Ovary (tissue), 10 donors: ENCODE measurements at regions of chr1 and their contacts with region 1.

Region 1: DNA sequence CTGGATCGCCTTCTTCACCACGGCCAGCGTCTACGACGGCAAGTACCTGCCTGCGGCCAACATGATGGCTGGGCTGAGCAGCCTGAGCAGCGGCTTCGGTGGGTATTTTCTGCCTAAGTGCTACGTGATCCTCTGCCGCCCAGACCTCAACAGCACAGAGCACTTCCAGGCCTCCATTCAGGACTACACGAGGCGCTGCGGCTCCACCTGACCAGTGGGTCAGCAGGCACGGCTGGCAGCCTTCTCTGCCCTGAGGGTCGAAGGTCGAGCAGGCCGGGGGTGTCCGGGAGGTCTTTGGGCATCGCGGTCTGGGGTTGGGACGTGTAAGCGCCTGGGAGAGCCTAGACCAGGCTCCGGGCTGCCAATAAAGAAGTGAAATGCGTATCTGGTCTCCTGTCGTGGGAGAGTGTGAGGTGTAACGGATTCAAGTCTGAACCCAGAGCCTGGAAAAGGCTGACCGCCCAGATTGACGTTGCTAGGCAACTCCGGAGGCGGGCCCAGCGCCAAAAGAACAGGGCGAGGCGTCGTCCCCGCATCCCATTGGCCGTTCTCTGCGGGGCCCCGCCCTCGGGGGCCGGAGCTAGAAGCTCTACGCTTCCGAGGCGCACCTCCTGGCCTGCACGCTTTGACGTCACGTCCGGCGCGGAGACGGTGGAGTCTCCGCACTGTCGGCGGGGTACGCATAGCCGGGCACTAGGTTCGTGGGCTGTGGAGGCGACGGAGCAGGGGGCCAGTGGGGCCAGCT is at the start of gene ZBTB48:
- DNase-seq: peak; percentile 100
- H3K4me3 ChIP-seq: peak within 1 kb of the TSS; percentile 99
- H3K27ac ChIP-seq: peak within 1 kb of the TSS; percentile 91 to 94
- H3K4me1 ChIP-seq: peaks cover 4% of the 10 kb centered on the region
- H3K27me3 ChIP-seq: no peaks in the 10 kb centered on the region
- CTCF ChIP-seq: no peak
- EP300 ChIP-seq: peak; percentile 8
- POLR2A ChIP-seq: peak; percentile 96
- total RNA-seq, gene ZBTB48: 20.4 to 42.5 (median 33.7) TPM

Region 2: DNA sequence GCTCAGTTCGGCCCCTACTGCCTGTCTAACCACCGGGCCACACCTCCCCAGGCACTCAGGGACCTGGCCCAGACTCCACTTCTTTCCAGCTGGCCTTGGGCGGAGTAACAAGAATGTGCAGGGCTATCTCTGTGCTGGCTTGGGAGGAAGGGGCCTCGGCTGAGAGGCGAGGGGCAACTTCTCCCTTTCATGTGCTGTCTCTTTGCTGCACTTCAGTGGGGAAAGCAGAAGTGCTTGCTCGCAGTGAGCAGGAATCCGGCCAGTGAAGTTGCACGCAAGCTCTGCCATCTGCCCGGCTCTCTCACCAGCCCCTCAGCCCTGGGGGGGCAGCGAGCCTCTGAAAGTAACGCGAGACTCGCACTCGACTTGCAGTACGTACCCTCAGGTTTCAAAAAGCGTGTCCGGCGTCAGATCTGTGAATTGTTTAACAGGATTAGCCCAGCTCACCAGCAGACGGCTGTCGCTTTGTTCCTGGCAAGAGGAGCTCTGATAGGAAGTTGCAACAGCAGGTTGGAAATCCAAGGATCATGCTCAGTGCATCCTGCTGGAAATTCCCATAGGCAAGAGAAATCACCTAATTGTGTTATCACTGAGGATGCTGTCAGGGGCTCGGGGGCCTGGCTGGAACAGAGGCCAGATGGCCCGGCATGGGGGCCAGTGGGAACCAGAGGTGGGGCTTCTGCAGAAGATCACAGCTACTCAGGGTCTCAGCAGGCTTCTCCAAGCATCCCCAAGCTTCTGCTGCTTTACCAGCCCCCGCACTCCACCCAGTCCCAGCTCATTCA is 808.4 kb before region 1 on chr1:
- intact Hi-C with region 1: loop called in 1 of 4 experiments (anchors 5 kb)
- DNase-seq: peak; percentile 55 to 82 (median 59)
- H3K4me3 ChIP-seq: no peak overlapping the region
- H3K27ac ChIP-seq: no peak overlapping the region
- H3K4me1 ChIP-seq: peaks cover 24% of the 10 kb centered on the region
- H3K27me3 ChIP-seq: no peaks in the 10 kb centered on the region
- CTCF ChIP-seq: no peak
- EP300 ChIP-seq: no peak
- POLR2A ChIP-seq: no peak

Region 3: GRCh38 chr1:6554031-6554906 is 25.3 kb before region 1 on chr1 and contains the start of gene NOL9:
- intact Hi-C with region 1: loop called in 1 of 4 experiments (anchors 1 kb)
- DNase-seq: peak; percentile 92 to 97 (median 96)
- H3K4me3 ChIP-seq: peak within 1 kb of the TSS; percentile 99
- H3K27ac ChIP-seq: peak within 1 kb of the TSS in 1 of 2 donors; percentile 15
- H3K4me1 ChIP-seq: peaks cover 10% of the 10 kb centered on the region
- H3K27me3 ChIP-seq: no peaks in the 10 kb centered on the region
- CTCF ChIP-seq: peak; percentile 94 to 97 (median 95)
- EP300 ChIP-seq: no peak
- POLR2A ChIP-seq: peak; percentile 36
- total RNA-seq, gene NOL9: 12.6 to 38.9 (median 30.0) TPM

Region 4: GRCh38 chr1:6601049-6601922 is 21.7 kb after region 1 on chr1:
- intact Hi-C with region 1: loop called in 1 of 4 experiments (anchors 2 kb)
- DNase-seq: peak; percentile 77 to 88 (median 80)
- H3K4me3 ChIP-seq: peak overlapping the region; percentile 45
- H3K27ac ChIP-seq: peak overlapping the region; percentile 67 to 99
- H3K4me1 ChIP-seq: peaks cover 25% of the 10 kb centered on the region
- H3K27me3 ChIP-seq: no peaks in the 10 kb centered on the region
- CTCF ChIP-seq: no peak
- EP300 ChIP-seq: no peak
- POLR2A ChIP-seq: peak; percentile 29

Region 5: DNA sequence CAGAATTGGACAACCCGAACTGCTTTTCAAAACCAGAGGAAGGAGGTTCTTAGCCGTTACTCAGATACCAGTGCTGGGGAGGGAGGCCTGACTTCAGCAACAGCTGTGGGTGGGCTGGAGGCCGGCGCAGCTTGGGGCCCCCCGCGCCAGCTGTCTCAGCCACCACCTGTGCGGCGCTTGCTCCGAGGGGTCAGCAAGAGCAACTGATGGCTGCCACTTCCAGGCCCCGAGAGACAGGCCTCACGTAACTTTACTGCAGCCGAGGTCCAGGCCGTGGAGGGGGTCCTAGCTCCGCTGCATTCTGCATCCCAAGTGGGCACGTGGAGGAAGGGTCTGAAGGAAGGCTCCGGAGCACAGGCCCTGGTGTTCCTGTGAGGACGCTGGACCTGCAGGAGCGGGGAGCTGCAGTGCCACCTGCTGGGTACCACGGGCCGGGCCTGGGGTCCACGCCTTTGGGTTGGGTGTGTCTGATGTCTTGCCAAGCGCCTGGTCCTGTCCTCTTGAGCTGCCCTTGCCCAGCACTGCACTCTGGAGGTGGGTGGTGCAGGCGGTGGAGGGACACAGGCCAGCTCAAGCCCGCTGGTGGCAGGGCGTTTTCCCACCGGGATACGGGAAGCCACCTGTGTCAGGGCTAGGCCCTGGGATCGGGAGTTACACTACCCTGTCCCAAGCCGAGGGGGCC is 55.0 kb after region 1 on chr1:
- intact Hi-C with region 1: loop called in 1 of 4 experiments (anchors 5 kb)
- DNase-seq: peak; percentile 39 to 70 (median 53)
- H3K4me3 ChIP-seq: no peak overlapping the region
- H3K27ac ChIP-seq: no peak overlapping the region
- H3K4me1 ChIP-seq: no peaks in the 10 kb centered on the region
- H3K27me3 ChIP-seq: no peaks in the 10 kb centered on the region
- CTCF ChIP-seq: no peak
- EP300 ChIP-seq: no peak
- POLR2A ChIP-seq: no peak

Region 6: DNA sequence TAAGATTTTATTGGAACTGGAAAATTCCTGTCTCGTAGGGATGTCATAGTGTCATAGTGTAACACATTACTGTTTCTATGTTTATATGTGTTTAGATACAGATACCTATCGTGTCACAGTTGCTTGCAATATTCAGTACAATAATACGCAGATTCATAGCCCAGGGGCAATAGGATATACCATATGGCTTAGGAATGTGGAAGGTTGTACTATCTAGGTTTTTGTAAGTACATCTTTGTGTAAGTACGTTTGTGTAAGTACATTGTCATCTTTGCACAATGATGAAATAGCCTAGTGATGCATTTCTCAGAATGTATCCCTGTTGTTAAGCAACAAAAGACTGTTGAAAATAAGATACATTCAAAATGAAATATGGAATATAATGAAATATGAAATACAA is 274.6 kb after region 1 on chr1:
- intact Hi-C with region 1: no loop called
- DNase-seq: no peak
- H3K4me3 ChIP-seq: no peak overlapping the region
- H3K27ac ChIP-seq: no peak overlapping the region
- H3K4me1 ChIP-seq: no peaks in the 10 kb centered on the region
- H3K27me3 ChIP-seq: no peaks in the 10 kb centered on the region
- CTCF ChIP-seq: no peak
- EP300 ChIP-seq: no peak
- POLR2A ChIP-seq: no peak